ENCODE measurements at regions of chr3 and their contacts with region 1.

Region 1: GRCh38 chr3:171772427-171773056 is 37.7 kb downstream of the PLD1 start:
- DNase-seq: peak in 1 of 3 donors; percentile 68
- ATAC-seq: peak; percentile 58 to 63 (median 60)
- H3K4me3 ChIP-seq: no peak overlapping the region
- H3K27ac ChIP-seq: peak overlapping the region in 2 of 3 donors; percentile 38 to 81
- H3K4me1 ChIP-seq: peaks cover 0 to 31% (median 5%) of the 10 kb centered on the region in 4 donors
- H3K27me3 ChIP-seq: no peaks in the 10 kb centered on the region
- CTCF ChIP-seq: peak; percentile 66 to 76 (median 72)
- POLR2A ChIP-seq: no peak

Region 2: GRCh38 chr3:171320750-171321558 is 451.6 kb before region 1 on chr3:
- intact Hi-C with region 1: no loop called
- DNase-seq: no peak
- ATAC-seq: peak in 3 of 4 donors; percentile 36 to 62 (median 52)
- H3K4me3 ChIP-seq: no peak overlapping the region
- H3K27ac ChIP-seq: no peak overlapping the region
- H3K4me1 ChIP-seq: no peaks in the 10 kb centered on the region
- H3K27me3 ChIP-seq: no peaks in the 10 kb centered on the region
- CTCF ChIP-seq: no peak
- POLR2A ChIP-seq: no peak

Region 3: DNA sequence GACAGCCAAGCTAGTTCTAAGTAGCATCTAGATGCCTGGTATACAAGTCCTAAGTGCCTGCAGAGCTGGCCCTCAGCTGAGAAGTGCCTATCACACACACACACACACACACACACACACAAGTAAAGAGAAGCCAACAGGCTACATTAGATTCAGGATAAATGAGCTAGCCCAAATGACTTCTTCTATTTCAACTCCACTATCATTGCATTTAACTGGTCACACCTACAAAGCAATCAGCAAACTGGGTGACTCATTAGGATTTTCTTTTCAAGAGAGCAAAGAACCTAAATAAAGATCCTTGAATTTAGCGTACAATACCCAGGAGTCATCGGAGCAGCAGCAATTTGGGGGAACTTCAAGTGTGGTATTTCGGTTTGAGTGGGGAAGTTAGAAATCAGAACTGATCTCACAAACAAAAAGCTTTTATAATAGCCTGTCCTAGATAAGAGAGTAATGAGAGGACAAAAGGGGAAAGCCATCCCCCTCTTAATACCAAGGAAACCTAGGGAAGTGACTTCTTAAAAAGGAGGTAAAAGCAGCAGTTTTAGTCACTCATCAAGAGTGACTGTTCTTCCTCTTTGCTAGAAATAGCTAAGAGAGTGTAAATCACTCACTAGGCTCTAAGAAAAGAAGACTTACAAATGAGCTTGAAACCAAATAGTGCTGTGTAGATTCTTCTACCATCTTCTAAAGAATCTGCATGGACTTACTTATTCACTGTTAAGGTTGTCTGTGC is 425.1 kb before region 1 on chr3:
- intact Hi-C with region 1: no loop called
- DNase-seq: no peak
- ATAC-seq: peak in 2 of 4 donors; percentile 32 to 34
- H3K4me3 ChIP-seq: no peak overlapping the region
- H3K27ac ChIP-seq: no peak overlapping the region
- H3K4me1 ChIP-seq: peaks cover 0 to under 1% (median under 1%) of the 10 kb centered on the region in 4 donors
- H3K27me3 ChIP-seq: no peaks in the 10 kb centered on the region
- CTCF ChIP-seq: no peak
- POLR2A ChIP-seq: no peak

Region 4: GRCh38 chr3:171646357-171647133 is 126.0 kb before region 1 on chr3:
- intact Hi-C with region 1: loop called (anchors 5 to 10 kb)
- DNase-seq: no peak
- ATAC-seq: peak; percentile 71 to 82 (median 75)
- H3K4me3 ChIP-seq: no peak overlapping the region
- H3K27ac ChIP-seq: peak overlapping the region in 1 of 3 donors; percentile 18
- H3K4me1 ChIP-seq: no peaks in the 10 kb centered on the region
- H3K27me3 ChIP-seq: no peaks in the 10 kb centered on the region
- CTCF ChIP-seq: peak; percentile 48 to 72 (median 58)
- POLR2A ChIP-seq: no peak

Region 5: GRCh38 chr3:171658841-171659240 is 113.7 kb before region 1 on chr3:
- intact Hi-C with region 1: no loop called
- DNase-seq: no peak
- ATAC-seq: no peak
- H3K4me3 ChIP-seq: no peak overlapping the region
- H3K27ac ChIP-seq: no peak overlapping the region
- H3K4me1 ChIP-seq: peaks cover 0 to 3% (median 0%) of the 10 kb centered on the region in 4 donors
- H3K27me3 ChIP-seq: no peaks in the 10 kb centered on the region
- CTCF ChIP-seq: no peak
- POLR2A ChIP-seq: no peak

Region 6: GRCh38 chr3:171690281-171690680 is 82.3 kb before region 1 on chr3:
- intact Hi-C with region 1: no loop called
- DNase-seq: no peak
- ATAC-seq: peak in 1 of 4 donors; percentile 49
- H3K4me3 ChIP-seq: no peak overlapping the region
- H3K27ac ChIP-seq: no peak overlapping the region
- H3K4me1 ChIP-seq: peaks cover 0 to 5% (median 0%) of the 10 kb centered on the region in 4 donors
- H3K27me3 ChIP-seq: no peaks in the 10 kb centered on the region
- CTCF ChIP-seq: no peak
- POLR2A ChIP-seq: no peak